Calu3 (cell line): ENCODE measurements at regions of chr15 and their contacts with region 1.

Region 1: GRCh38 chr15:67383899-67384298 is 129.3 kb downstream of the IQCH start:
- DNase-seq: no peak
- H3K4me3 Mint-ChIP-seq: no peak overlapping the region
- H3K27ac Mint-ChIP-seq: no peak overlapping the region
- H3K4me1 Mint-ChIP-seq: no peaks in the 10 kb centered on the region
- H3K27me3 Mint-ChIP-seq: no peaks in the 10 kb centered on the region
- CTCF ChIP-seq: no peak

Region 2: DNA sequence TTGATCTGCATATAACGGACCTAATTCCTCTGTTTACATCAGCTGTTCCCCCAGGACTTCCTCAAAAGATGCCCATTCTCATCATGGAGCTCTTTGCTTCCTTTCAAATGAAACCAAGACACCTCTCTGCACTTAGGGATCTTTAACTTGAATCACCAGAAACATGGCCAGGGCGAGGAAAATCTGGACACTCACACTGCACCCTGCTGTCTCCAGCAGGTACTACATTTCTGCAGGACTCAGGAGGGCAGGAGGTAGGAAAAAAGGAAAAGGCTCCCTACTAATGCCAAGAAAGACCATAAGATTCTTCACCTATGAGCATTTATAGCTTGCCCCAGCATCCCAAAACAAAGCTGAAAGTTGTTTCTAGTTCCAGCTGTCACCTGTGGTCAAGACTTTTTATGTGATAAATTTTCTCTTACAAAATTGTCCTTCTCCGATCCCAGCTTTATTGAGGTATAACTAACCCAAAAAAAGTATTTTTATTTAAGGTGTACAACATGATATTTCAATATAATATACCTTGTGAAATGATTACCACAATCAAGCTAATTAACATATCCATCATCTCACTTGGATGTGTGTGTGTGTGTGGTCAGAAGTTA is 49.7 kb after region 1 on chr15:
- CTCF ChIA-PET with region 1: no interaction called
- intact Hi-C with region 1: loop called (anchors 5 kb)
- DNase-seq: peak; percentile 69
- H3K4me3 Mint-ChIP-seq: no peak overlapping the region
- H3K27ac Mint-ChIP-seq: no peak overlapping the region
- H3K4me1 Mint-ChIP-seq: no peaks in the 10 kb centered on the region
- H3K27me3 Mint-ChIP-seq: no peaks in the 10 kb centered on the region
- CTCF ChIP-seq: peak; percentile 80